ENCODE measurements at regions of chr16 and their contacts with region 1.

Region 1: GRCh38 chr16:3529175-3529574 is 28.4 kb downstream of the CLUAP1 start:
- DNase-seq: no peak
- H3K27ac ChIP-seq: no peak overlapping the region
- CTCF ChIP-seq: no peak

Region 2: DNA sequence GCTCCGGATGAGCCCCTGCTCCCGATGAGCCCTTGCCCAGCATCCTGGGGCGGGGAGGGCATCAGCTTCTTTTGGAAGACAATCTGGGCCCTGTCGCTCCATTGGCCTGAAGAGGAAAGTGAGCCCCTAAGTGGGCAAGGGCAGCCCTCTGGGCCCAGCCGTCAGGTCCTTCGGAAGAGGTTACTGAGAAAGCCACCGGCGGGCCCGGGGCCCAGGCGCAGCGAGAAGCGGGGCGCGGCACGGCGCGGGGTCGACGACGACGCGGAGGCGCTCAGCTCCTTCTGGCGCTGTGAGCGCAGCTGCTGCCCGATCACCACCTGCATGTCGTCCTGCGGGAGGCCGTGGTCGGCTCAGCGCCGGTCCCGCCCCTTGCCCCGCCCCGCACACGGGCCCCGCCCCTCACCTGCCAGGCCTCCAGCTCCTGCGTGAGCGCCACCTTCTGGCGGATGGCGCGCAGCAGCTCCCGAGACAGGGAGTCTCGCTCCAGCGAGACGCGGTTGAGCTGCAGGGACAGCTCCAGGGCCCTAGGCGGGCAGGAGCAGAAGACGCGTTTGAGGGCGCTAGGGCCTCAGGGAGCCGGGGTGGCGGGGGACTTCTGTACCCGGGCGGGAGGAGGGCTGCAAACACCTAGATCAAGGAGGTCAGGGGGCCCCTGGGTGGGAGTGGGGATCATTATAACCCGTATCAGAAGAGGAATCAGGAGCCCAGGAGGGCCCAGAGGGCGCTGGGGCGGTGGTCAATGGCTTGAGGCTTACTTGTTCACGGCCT is 501.0 kb before region 1 on chr16:
- CTCF ChIA-PET with region 1: no interaction called
- POLR2A ChIA-PET with region 1: no interaction called
- DNase-seq: peak; percentile 86
- H3K27ac ChIP-seq: peak overlapping the region; percentile 99
- CTCF ChIP-seq: peak; percentile 90

Region 3: DNA sequence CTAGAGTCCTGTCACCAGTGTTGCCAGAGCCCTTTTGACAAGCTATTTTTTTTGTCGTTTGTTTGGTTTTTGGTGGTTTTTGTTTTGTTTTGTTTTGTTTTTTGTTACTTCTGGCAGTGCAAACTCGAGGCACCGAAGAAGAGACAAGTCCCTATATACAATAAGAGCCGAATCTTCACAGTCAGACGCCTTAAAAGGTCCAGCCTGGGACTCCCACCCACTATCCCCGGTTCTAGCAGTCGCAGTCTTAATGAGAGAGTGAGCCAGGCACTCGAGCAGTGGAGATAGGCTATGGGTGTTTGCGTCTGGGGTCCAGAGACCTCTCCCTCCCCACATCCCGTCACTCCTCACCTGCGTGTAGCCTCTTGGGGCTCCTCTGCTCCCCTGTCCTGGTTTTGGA is 339.3 kb before region 1 on chr16:
- CTCF ChIA-PET with region 1: no interaction called
- POLR2A ChIA-PET with region 1: interaction called, 10 read pairs
- DNase-seq: no peak
- H3K27ac ChIP-seq: no peak overlapping the region
- CTCF ChIP-seq: no peak